Caco-2 (cell line): ENCODE measurements at regions of chr4 and their contacts with region 1.

Region 1: DNA sequence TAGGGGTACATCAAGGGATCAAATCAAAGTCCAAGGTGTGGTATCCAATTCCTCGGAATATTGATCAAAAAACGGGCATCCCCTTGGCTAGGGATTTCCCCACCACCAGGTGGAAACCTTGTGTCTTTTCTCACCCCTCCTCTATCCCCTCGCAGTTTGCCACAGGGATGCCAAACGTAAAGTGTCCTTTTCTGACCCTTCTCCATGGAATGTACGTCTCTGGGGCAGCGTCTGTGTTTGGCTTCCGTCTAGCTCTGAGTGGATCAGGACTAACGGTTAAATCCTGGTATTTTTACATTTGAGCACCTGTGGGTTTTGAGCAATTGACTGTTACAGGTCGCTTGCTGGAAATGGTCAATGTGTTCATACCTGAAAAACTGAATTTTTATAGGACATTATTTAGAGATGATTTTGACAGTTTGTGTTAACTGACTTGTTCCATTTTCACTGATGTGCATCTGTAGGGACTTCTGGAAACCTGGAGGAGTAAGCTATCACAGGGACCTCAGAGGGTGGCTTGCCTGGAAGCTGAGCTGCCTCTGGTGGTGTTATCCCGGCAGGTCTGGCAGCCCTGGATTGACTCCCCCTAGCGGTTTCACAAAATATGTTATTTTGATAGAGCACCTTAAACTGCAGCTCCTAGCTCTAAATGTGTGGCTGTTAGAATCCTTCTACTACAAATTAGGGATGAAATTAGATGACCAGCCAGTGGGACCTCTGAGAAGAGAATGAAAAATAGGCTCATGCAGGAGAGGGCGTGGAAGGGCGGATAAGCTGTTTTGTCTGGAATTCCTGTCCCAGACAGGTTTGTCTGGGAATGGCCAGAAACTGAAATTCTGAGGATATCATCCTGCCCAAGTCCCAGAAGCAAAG is 8.8 kb upstream of the MGST2 start:
- DNase-seq: peak; percentile 79 to 83
- H3K4me3 ChIP-seq: no peak overlapping the region
- H3K4me3 Mint-ChIP-seq: peak overlapping the region; percentile 61
- H3K27ac Mint-ChIP-seq: peak overlapping the region; percentile 40
- H3K4me1 ChIP-seq: peaks cover 47% of the 10 kb centered on the region
- H3K4me1 Mint-ChIP-seq: peaks cover 41% of the 10 kb centered on the region
- H3K27me3 ChIP-seq: no peaks in the 10 kb centered on the region
- H3K27me3 Mint-ChIP-seq: no peaks in the 10 kb centered on the region
- CTCF ChIP-seq: peak; percentile 71 to 89

Region 2: GRCh38 chr4:139603576-139604387 is 53.1 kb before region 1 on chr4:
- CTCF ChIA-PET with region 1: interaction called, 7 read pairs
- POLR2A ChIA-PET with region 1: no interaction called
- intact Hi-C with region 1: loop called (anchors 1 kb)
- DNase-seq: peak; percentile 67 to 77
- H3K4me3 ChIP-seq: no peak overlapping the region
- H3K4me3 Mint-ChIP-seq: no peak overlapping the region
- H3K27ac Mint-ChIP-seq: no peak overlapping the region
- H3K4me1 ChIP-seq: peaks cover 34% of the 10 kb centered on the region; the same call in 1 of the 2 replicates
- H3K4me1 Mint-ChIP-seq: peaks cover 37% of the 10 kb centered on the region
- H3K27me3 ChIP-seq: no peaks in the 10 kb centered on the region
- H3K27me3 Mint-ChIP-seq: no peaks in the 10 kb centered on the region
- CTCF ChIP-seq: peak; percentile 64 to 71

Region 3: DNA sequence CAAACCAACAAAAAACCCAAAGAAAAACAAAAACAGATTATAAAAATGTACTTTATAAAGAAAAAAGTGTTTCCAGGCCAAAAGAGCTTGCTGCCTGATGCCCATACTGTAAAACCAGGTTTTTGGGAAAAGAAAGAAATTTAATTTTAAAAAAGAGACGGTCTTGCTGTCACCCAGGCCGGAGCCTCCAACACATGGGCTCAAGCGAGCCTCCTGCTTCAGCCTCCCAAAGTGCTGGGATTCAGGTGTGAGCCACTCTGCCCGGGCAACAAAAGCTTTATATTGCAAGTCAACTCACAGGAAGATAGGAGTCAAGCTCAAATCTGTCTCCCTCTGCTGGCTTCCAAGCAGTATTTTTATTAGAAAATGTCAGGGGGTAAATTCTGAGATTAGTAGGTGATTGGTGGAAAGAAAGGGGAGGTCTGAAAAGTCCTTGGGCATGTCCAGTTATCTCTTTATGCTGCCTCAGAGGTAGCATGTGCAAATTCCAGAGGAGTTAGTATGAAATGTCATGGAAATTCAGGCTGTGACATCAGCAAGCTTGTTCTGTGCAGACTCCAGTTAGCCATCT is 48.1 kb after region 1 on chr4:
- CTCF ChIA-PET with region 1: interaction called, 29 read pairs
- POLR2A ChIA-PET with region 1: interaction called, 4 read pairs
- intact Hi-C with region 1: loop called (anchors 1 kb)
- DNase-seq: peak in 1 of 2 experiments; percentile 23
- H3K4me3 ChIP-seq: no peak overlapping the region
- H3K4me3 Mint-ChIP-seq: no peak overlapping the region
- H3K27ac Mint-ChIP-seq: peak overlapping the region; percentile 71
- H3K4me1 ChIP-seq: no peaks in the 10 kb centered on the region
- H3K4me1 Mint-ChIP-seq: no peaks in the 10 kb centered on the region
- H3K27me3 ChIP-seq: no peaks in the 10 kb centered on the region
- H3K27me3 Mint-ChIP-seq: no peaks in the 10 kb centered on the region
- CTCF ChIP-seq: peak in 1 of 2 experiments; percentile 42

Region 4: DNA sequence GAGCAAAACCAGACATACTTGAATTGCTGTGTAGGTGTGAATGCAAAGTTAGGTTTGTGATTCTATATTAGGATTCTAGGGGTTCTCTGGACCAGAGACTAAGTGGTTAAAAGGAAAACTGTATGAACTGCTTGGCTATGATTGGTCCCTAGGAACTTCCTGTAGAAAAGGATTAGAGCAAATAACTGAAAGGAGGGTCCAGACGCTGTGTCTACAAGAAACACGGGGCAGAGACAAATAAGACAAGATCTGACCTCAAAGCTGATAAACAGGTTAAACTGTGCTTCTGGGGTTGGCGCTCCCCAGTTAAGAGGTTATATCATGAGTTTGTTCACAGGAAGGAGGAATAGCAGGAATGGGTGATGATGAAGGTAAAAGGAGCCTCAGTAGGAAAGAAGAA is 192.4 kb after region 1 on chr4:
- CTCF ChIA-PET with region 1: no interaction called
- POLR2A ChIA-PET with region 1: no interaction called
- intact Hi-C with region 1: no loop called
- DNase-seq: peak; percentile 47 to 52
- H3K4me3 ChIP-seq: 0 out of 2 replicates have a peak overlapping the region, but pooled peaks have one; percentile 5
- H3K4me3 Mint-ChIP-seq: peak overlapping the region; percentile 47
- H3K27ac Mint-ChIP-seq: no peak overlapping the region
- H3K4me1 ChIP-seq: peaks cover 43% of the 10 kb centered on the region
- H3K4me1 Mint-ChIP-seq: peaks cover 28% of the 10 kb centered on the region
- H3K27me3 ChIP-seq: no peaks in the 10 kb centered on the region
- H3K27me3 Mint-ChIP-seq: no peaks in the 10 kb centered on the region
- CTCF ChIP-seq: no peak

Region 5: DNA sequence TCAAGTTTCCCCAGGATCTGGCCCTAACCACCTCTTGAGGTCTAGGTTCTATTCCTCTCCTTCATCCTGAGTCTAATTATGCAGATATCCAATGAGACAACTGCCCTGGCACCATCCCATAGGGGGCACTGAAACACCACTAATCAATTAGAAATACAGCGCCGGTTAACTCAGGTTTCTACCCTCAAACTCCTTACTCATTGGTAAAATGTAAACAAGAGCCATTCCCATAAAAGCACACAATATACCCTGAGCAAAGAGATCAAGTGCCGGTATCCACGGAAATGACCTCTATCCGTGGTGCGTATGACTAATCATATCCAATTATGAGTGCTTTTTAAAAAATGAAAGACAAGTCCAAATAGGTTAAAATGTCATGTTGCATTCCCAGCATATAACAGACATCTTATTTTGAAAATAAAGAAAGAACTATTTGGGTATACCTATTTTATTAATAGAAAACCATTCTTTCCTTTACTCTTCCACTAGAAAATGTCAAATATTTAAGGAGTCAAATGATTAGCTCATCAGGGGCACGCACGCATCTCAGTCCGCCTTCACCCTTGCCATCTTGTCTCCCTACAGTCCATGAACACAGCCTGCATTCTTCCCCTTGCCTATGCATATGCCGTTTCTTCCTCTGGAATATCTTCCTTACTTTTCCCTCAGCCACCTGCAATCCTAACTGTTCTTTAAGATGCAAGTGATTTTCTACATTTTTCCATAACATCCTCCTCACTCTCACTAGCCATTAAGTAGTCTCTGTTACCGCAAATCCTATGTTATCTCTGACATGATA is 356.0 kb after region 1 on chr4:
- CTCF ChIA-PET with region 1: no interaction called
- POLR2A ChIA-PET with region 1: no interaction called
- intact Hi-C with region 1: loop called (anchors 2 kb)
- DNase-seq: peak; percentile 69 to 77
- H3K4me3 ChIP-seq: no peak overlapping the region
- H3K4me3 Mint-ChIP-seq: peak overlapping the region; percentile 0
- H3K27ac Mint-ChIP-seq: peak overlapping the region; percentile 23
- H3K4me1 ChIP-seq: peaks cover 18% of the 10 kb centered on the region
- H3K4me1 Mint-ChIP-seq: peaks cover 30% of the 10 kb centered on the region
- H3K27me3 ChIP-seq: no peaks in the 10 kb centered on the region
- H3K27me3 Mint-ChIP-seq: no peaks in the 10 kb centered on the region
- CTCF ChIP-seq: peak; percentile 56 to 65

Region 6: GRCh38 chr4:140373328-140374129 is 716.7 kb after region 1 on chr4 and contains the start of gene SCOC:
- CTCF ChIA-PET with region 1: interaction called, 5 read pairs
- POLR2A ChIA-PET with region 1: no interaction called
- intact Hi-C with region 1: loop called (anchors 5 kb)
- DNase-seq: peak; percentile 98 to 99
- H3K4me3 ChIP-seq: peak within 1 kb of the TSS; percentile 90
- H3K4me3 Mint-ChIP-seq: no peak within 1 kb of the TSS
- H3K27ac Mint-ChIP-seq: no peak within 1 kb of the TSS
- H3K4me1 ChIP-seq: peaks cover 19% of the 10 kb centered on the region
- H3K4me1 Mint-ChIP-seq: peaks cover 7% of the 10 kb centered on the region
- H3K27me3 ChIP-seq: no peaks in the 10 kb centered on the region
- H3K27me3 Mint-ChIP-seq: no peaks in the 10 kb centered on the region
- CTCF ChIP-seq: no peak
- total RNA-seq, gene SCOC: 36.8 and 39.6 TPM in 2 replicates